ENCODE measurements at regions of chr4 and their contacts with region 1.

Region 1: GRCh38 chr4:55546756-55547465 is at the start of gene CLOCK:
- DNase-seq: peak; percentile 80
- H3K4me3 Mint-ChIP-seq: peak within 1 kb of the TSS; percentile 92
- H3K27ac Mint-ChIP-seq: peak within 1 kb of the TSS; percentile 86
- H3K4me1 Mint-ChIP-seq: peaks cover 41% of the 10 kb centered on the region
- H3K27me3 Mint-ChIP-seq: peaks cover 13% of the 10 kb centered on the region
- total RNA-seq, gene CLOCK: 12.7 and 13.0 TPM in 2 replicates

Region 2: DNA sequence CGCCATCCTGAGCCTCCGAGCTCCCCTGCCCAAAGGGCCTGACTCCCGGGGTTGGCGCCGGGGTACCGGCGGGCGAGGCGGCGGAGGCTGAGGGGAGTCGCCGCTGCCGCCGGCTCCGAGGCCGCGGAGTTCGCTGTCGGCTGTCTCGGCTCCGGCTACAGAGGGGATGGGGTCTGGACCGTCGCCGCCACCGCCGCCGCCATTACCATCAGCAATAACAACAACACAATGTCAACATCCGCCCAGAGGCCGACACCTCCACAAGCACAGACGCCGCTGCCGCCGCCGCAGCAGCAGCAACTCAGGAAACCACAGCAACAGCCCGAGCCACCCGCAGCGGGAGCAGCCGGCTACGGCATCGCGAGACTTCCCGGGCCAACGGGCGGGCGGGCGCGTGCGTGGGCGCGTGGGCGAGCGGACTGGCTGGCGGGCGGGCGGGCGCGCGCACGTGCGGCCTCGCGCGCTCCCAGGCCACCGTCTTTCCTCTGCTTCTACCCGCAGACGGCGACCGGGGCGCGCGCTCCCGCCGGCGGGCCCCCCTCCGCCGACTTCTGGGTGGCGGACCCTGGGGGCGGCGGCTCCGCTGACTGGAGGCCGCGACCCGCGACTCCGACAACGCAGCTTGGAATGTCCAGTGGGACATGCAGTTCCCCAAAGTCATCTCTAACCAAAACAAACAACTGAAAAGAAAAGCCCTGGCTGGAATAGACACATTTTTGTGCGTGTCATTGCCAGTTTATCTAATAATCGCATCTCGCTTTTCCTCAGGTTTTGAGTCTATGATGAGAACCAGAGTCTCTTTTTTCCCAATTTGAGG is 1482.4 kb before region 1 on chr4 and contains the start of gene CHIC2:
- intact Hi-C with region 1: loop called (anchors 10 kb)
- DNase-seq: peak; percentile 96
- H3K4me3 Mint-ChIP-seq: peak within 1 kb of the TSS; percentile 91
- H3K27ac Mint-ChIP-seq: peak within 1 kb of the TSS; percentile 94
- H3K4me1 Mint-ChIP-seq: peaks cover 46% of the 10 kb centered on the region
- H3K27me3 Mint-ChIP-seq: no peaks in the 10 kb centered on the region
- total RNA-seq, gene CHIC2: 19.1 and 20.3 TPM in 2 replicates

Region 3: GRCh38 chr4:54913751-54914526 is 633.0 kb before region 1 on chr4:
- intact Hi-C with region 1: no loop called
- DNase-seq: no peak
- H3K4me3 Mint-ChIP-seq: no peak overlapping the region
- H3K27ac Mint-ChIP-seq: no peak overlapping the region
- H3K4me1 Mint-ChIP-seq: no peaks in the 10 kb centered on the region
- H3K27me3 Mint-ChIP-seq: no peaks in the 10 kb centered on the region

Region 4: DNA sequence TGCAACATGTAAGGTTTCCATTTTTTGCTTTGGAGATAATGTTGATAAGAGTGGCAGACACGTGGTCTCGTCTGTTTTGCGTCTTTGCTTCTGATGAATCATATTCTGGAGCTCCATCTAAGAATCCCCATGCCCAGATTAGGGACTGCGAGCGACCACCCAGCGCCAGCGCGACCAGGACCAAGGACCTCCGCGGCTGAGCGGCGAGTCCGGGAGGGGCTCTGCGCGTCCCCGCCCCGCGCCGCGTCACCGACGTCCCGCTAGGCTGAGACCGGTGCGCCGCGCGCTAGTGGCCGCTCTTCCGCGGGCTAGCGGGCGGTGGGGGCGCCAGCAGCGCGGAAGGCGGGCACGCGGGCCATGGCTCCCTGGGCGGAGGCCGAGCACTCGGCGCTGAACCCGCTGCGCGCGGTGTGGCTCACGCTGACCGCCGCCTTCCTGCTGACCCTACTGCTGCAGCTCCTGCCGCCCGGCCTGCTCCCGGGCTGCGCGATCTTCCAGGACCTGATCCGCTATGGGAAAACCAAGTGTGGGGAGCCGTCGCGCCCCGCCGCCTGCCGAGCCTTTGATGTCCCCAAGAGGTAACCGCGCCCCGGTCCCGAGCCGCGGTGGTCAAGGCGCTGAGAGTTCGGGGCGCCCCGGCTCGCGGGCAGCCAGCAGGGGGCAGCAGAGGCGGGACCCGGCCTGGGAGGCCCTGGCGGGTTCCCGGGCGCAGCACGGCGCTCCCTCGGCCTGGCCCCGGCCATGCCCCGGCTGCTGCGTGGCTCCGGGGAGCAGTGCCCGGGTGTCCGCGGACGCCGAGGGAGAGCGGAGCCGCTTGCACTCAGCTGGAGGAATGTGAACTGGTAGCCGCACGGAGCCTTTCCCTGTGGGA is 200.7 kb before region 1 on chr4 and contains the start of gene SRD5A3:
- intact Hi-C with region 1: loop called (anchors 2 kb)
- DNase-seq: peak; percentile 74
- H3K4me3 Mint-ChIP-seq: peak within 1 kb of the TSS; percentile 89
- H3K27ac Mint-ChIP-seq: peak within 1 kb of the TSS; percentile 92
- H3K4me1 Mint-ChIP-seq: peaks cover 36% of the 10 kb centered on the region
- H3K27me3 Mint-ChIP-seq: no peaks in the 10 kb centered on the region
- total RNA-seq, gene SRD5A3: 32.4 and 33.2 TPM in 2 replicates

Region 5: DNA sequence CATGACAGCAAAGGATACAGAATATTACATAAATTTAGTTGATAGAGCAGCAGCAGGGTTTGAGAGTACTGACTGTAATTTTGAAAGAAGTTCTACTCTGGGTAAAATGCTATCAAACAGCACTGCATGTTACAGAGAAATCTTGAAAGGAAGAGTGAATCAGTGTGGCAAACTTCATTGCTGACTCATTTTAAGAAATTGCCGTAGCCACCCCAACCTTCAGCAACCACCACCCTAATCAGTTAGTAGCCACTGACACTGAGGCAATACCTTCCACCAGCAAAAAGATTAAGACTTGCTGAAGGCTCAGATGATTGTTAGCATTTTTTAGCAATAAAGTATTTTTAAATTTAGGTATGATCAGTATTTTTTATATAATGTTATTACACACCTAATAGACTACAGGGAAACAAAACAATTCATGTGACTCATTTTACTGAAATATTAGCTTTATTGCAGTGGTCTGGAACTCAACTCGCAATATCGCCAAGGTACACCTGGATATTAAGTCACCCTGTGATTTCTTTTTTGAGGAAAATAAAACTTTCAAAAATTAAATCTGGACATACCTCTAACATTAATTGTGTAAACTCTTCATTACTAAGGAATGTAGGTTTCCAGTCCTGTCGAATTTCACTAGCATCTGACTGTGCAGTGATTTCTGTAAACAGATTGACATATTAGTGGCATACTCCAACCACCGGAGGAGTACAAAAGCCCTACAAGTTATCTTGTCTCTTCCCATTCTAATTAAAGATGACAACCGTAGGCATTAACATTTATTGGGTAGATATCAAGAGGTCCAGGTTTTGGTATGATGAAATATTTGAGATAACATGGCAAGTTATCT is 71.3 kb before region 1 on chr4:
- intact Hi-C with region 1: loop called (anchors 2 kb)
- DNase-seq: no peak
- H3K4me3 Mint-ChIP-seq: no peak overlapping the region
- H3K27ac Mint-ChIP-seq: no peak overlapping the region
- H3K4me1 Mint-ChIP-seq: peaks cover 7% of the 10 kb centered on the region
- H3K27me3 Mint-ChIP-seq: no peaks in the 10 kb centered on the region

Region 6: DNA sequence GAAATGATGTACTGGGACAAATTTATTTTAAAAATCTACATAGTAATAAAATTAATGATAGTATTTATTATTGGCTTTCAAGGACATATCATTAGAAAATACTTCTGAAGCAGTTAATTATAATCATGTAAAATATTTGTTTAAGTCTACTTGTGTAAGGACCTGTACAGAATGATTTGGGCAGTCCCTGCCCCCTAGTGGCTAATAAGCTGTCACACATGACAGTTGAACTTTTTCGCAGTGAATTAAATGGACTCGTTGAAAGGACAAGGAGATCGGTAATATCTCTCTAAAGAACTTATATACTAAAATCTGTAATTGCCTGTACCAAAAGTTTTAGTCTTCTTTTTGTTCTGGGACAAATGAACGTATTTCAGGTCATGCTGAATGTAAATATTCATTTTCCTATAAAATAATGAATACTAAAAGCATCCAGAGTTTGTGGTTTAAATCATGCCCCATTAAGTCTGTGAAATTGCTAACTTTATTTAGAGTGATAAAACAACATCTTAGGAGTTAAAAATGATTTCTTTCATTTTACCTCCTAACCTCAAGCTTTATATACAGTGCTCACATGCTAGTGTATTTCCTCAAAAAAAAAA is 320.2 kb after region 1 on chr4:
- intact Hi-C with region 1: loop called (anchors 5 kb)
- DNase-seq: no peak
- H3K4me3 Mint-ChIP-seq: no peak overlapping the region
- H3K27ac Mint-ChIP-seq: peak overlapping the region; percentile 24
- H3K4me1 Mint-ChIP-seq: peaks cover 21% of the 10 kb centered on the region
- H3K27me3 Mint-ChIP-seq: no peaks in the 10 kb centered on the region

Region 7: DNA sequence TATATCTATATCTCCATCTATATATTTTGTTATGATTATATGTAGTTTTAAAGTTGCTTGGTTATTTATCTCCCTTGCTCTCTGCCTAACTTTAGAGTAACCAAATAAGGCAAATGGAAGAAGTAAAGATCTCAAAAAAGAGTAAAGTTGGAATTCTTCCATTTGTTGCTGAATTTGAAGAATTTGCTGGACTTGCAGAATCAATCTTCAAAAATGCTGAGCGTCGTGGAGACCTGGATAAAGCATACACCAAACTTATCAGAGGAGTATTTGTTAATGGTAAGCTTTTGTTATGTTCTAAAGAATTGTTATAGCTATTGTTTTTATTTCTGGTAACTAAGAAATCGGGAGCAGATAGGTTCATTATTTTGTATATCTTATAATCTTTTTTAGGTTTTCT is 349.7 kb after region 1 on chr4:
- intact Hi-C with region 1: no loop called
- DNase-seq: no peak
- H3K4me3 Mint-ChIP-seq: no peak overlapping the region
- H3K27ac Mint-ChIP-seq: no peak overlapping the region
- H3K4me1 Mint-ChIP-seq: peaks cover 6% of the 10 kb centered on the region
- H3K27me3 Mint-ChIP-seq: no peaks in the 10 kb centered on the region

Region 8: DNA sequence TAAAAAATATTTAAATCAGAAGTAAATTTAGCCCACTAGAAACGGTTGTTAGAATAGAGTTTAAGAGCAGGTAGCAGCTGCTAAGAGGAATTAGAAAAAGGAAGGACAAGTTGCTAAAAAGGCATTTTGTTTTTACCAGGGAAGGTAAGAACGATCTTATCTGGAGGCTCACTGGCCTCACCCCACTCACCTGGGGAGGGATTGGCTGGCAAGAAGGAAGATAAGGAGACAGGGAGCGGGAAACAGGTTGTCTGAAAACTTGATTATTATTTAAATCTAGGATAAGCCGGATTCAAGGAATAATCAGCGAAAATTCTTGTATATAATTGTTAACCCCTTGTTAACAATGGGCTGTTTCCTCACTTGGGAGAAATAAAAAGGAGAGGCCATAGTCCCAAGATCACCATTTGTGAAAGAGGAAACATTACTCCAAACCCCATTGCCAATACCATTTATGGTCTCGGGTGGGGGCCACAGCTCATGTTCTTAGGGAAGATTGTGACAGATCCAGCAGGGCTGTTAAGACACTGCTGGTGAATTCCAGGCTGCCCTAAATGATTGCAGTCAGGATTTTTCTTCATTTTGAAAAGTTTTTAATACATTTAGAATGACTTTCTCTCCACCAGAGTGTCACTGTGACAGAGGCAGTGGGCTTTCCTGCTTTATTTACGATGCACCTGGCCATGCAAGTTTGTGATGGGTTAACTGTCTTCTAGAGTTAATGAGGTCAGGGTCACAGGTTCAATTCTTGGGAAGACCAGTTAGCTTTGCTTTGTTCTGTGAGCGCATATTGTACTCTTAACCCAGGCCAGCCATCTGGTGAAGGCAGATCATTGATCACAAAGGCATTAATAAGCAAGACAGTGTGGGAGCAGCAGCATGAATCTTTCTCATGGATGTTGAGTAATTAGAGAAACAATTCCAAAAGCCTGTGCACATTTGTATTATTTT is 508.4 kb after region 1 on chr4:
- intact Hi-C with region 1: no loop called
- DNase-seq: no peak
- H3K4me3 Mint-ChIP-seq: no peak overlapping the region
- H3K27ac Mint-ChIP-seq: no peak overlapping the region
- H3K4me1 Mint-ChIP-seq: no peaks in the 10 kb centered on the region
- H3K27me3 Mint-ChIP-seq: peaks cover 17% of the 10 kb centered on the region

Region 9: GRCh38 chr4:56301181-56302076 is 754.5 kb after region 1 on chr4:
- intact Hi-C with region 1: loop called (anchors 5 kb)
- DNase-seq: peak; percentile 49
- H3K4me3 Mint-ChIP-seq: peak overlapping the region; percentile 38
- H3K27ac Mint-ChIP-seq: no peak overlapping the region
- H3K4me1 Mint-ChIP-seq: peaks cover 11% of the 10 kb centered on the region
- H3K27me3 Mint-ChIP-seq: peaks cover 2% of the 10 kb centered on the region

Region 10: GRCh38 chr4:56655209-56655626 is 1108.3 kb after region 1 on chr4:
- intact Hi-C with region 1: loop called (anchors 5 kb)
- DNase-seq: no peak
- H3K4me3 Mint-ChIP-seq: peak overlapping the region; percentile 87
- H3K27ac Mint-ChIP-seq: peak overlapping the region; percentile 85
- H3K4me1 Mint-ChIP-seq: peaks cover 68% of the 10 kb centered on the region
- H3K27me3 Mint-ChIP-seq: peaks cover 23% of the 10 kb centered on the region